Aorta (tissue), 5 donors: ENCODE measurements at regions of chr14 and their contacts with region 1.

Region 1: GRCh38 chr14:36373982-36374673 is 53.7 kb upstream of the MBIP start:
- DNase-seq: peak; percentile 77 to 80
- ATAC-seq: peak; percentile 79
- H3K4me3 ChIP-seq: no peak overlapping the region
- H3K27ac ChIP-seq: no peak overlapping the region
- H3K4me1 ChIP-seq: no peaks in the 10 kb centered on the region
- H3K27me3 ChIP-seq: no peaks in the 10 kb centered on the region

Region 2: GRCh38 chr14:35879654-35880249 is 494.4 kb before region 1 on chr14:
- intact Hi-C with region 1: loop called in 1 of 2 experiments (anchors 10 kb)
- DNase-seq: no peak
- ATAC-seq: no peak
- H3K4me3 ChIP-seq: no peak overlapping the region
- H3K27ac ChIP-seq: no peak overlapping the region
- H3K4me1 ChIP-seq: no peaks in the 10 kb centered on the region
- H3K27me3 ChIP-seq: no peaks in the 10 kb centered on the region

Region 3: DNA sequence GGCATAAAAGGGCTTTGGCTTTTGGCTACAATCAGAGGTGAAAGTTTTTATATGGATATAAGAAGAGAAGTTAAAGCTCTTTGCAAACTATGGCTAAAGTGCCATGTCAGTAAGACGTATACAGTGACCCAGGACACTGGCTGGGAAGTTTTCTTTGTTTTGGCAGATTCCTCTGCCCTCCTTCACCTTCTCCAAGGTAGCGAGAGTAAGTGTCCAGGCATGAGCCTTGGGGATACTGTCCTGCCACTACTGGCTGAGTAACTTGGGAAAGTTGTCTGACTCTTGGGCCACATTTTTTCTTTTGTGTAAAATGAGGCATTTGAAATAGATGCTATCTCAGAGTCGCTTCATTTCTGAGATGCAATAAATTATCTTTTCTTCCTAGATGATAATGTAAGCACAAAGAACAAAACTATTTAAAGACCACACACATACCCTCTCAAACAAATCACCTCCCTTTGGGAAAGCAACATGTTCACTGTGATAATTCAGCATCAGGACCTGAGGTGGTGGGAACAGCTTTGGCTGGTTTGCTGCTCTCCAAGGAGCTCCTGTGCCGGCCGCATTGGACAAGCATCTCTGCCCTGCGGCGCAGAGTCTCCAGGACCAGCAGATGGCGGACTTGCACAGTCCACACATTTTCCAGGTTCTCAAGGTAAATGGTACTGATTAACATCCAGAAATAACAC is 304.0 kb before region 1 on chr14:
- intact Hi-C with region 1: loop called in 1 of 2 experiments (anchors 10 kb)
- DNase-seq: no peak
- ATAC-seq: no peak
- H3K4me3 ChIP-seq: no peak overlapping the region
- H3K27ac ChIP-seq: no peak overlapping the region
- H3K4me1 ChIP-seq: peaks cover 0 to 4% of the 10 kb centered on the region in 2 donors
- H3K27me3 ChIP-seq: no peaks in the 10 kb centered on the region

Region 4: DNA sequence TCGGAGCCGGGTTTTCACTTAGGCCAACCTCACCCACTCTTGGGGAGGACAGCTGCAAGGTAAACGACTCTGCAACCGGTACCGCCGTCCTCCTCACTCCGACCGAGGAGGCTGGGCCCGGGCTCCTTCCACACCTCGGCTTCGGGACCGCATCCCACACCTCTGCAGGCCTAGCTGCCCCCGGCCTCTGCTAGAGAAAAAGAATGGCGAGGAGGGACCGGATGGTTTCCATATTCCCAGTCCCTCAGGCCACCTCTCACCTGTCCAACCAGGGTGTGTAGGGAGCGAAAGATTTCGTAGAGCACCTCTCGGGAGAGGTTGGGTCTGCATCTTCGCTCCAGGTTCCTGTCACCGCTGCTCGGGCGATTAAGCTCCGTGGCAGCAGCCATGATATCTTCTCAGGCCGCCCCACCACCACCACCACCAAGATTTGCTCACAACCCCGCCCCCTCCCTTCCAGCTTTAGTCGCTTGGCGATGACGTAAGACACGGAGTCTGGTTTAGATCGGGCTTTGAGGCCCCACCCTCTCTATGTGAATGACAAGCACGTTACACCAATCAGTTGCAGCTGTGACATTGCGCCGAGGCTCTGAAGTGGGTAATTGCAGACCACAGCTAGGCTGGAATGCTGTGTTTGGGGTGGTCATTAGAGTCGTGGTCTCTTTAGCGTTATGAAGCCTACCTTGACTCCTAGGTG is 53.8 kb before region 1 on chr14 and contains the start of gene MBIP:
- intact Hi-C with region 1: no loop called
- DNase-seq: peak; percentile 93
- ATAC-seq: peak; percentile 99
- H3K4me3 ChIP-seq: peak within 1 kb of the TSS; percentile 65 to 87
- H3K27ac ChIP-seq: peak within 1 kb of the TSS in 1 of 2 donors; percentile 70
- H3K4me1 ChIP-seq: no peaks in the 10 kb centered on the region
- H3K27me3 ChIP-seq: peaks cover 0 to 1% of the 10 kb centered on the region in 2 donors
- total RNA-seq, gene MBIP: 23.4 to 24.6 TPM

Region 5: DNA sequence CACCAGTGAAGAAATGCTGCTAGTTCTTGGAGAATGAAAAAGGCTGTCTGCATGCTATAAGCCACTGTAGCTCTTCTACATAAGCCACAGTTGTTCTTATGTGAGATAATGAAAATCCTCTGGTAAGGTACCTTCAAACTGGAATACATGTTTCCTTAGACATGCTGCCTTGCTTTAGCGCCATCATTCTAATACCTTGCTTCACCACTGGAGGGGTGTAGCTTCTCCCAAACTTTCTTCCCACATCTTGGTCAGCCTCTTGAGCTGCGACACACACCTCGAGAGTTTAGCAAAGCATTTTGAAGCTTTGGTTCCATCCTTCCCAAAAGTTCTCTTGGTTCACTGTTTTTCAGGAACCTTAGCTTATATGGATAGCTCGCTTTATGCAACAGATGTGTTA is 76.4 kb after region 1 on chr14:
- intact Hi-C with region 1: no loop called
- DNase-seq: no peak
- ATAC-seq: no peak
- H3K4me3 ChIP-seq: no peak overlapping the region
- H3K27ac ChIP-seq: no peak overlapping the region
- H3K4me1 ChIP-seq: no peaks in the 10 kb centered on the region
- H3K27me3 ChIP-seq: no peaks in the 10 kb centered on the region